ENCODE measurements at regions of chr7 and their contacts with region 1.

Region 1: GRCh38 chr7:70439651-70440050 is 692.3 kb upstream of the GALNT17 start:
- DNase-seq: no peak

Region 2: DNA sequence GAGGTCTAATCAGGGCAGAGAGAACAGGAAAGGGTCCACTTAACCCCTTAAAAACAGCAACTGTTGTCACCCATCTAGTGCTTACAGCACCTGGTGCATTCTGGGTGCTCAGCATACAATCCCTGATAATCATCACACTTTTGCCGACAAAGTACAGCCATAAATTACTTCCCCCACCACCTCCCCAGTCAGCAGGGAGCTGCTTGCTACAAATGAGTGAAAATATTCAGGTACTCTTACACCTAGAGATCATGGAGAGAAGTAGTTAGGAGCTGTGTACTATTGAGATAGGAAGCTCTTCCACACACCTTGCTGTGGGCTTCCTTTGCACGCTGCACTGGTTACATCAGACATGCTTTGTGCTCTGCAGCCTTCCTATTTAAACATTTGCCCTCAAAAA is 31.2 kb before region 1 on chr7:
- intact Hi-C with region 1: loop called in 1 of 2 experiments (anchors 1 kb)
- DNase-seq: no peak

Region 3: GRCh38 chr7:71521506-71521905 is 1081.9 kb after region 1 on chr7:
- intact Hi-C with region 1: loop called in 1 of 2 experiments (anchors 5 kb)
- DNase-seq: no peak

Measured in posterior vena cava (tissue), 2 donors.